Prostate gland (tissue), 2 donors: ENCODE measurements at regions of chr10 and their contacts with region 1.

Region 1: GRCh38 chr10:102729029-102730026 is 14.4 kb upstream of the WBP1L start:
- DNase-seq: peak; percentile 82
- H3K4me3 ChIP-seq: no peak overlapping the region
- H3K27ac ChIP-seq: no peak overlapping the region
- H3K4me1 ChIP-seq: no peaks in the 10 kb centered on the region
- H3K27me3 ChIP-seq: no peaks in the 10 kb centered on the region
- CTCF ChIP-seq: peak; percentile 77 to 94 (median 90)
- POLR2A ChIP-seq: no peak

Region 2: GRCh38 chr10:102904346-102904745 is 175.0 kb after region 1 on chr10:
- intact Hi-C with region 1: loop called (anchors 1 kb)
- DNase-seq: no peak
- H3K4me3 ChIP-seq: no peak overlapping the region
- H3K27ac ChIP-seq: no peak overlapping the region
- H3K4me1 ChIP-seq: no peaks in the 10 kb centered on the region
- H3K27me3 ChIP-seq: no peaks in the 10 kb centered on the region
- CTCF ChIP-seq: no peak
- POLR2A ChIP-seq: no peak

Region 3: DNA sequence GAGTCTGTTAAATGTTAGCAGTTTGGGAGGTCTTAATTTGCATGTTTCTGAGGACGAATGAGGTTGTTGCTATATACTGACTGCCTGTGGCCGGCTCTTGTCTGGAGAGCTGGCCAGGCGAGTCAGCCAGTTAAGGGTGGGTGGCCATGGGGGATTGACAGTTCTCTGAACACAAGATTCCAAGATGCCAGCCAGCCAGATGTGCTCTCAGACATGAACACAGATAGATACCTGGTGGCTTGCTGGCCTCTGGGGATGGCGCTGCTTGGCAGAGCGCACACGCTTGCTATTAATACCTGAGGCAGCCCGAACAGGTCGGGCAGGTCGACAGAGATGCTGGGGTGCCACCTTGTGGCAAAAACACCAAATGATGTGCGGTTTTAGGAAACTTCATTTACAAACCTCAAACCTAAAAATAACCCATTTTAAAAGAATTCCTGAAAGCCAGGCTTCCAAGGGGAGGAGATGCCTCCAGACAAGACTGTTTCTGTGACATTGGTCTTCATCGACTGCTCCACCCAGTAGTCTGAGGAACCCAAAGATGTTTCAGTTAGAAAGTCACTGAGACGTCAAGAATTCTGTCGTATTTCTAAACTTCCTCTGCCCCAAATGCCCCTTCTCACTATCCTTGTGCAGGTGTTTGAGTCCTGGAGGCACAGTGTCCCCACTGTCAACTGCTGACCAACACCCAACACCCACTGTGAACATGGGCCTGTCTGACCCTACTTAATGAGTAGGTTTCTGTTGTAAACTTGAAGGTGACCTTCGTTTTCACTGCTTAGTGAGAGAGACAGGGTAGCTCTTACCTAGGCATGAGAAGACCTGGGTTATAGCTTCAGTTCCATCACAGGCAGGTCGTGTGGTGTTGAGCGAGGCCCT is 340.4 kb after region 1 on chr10:
- intact Hi-C with region 1: loop called (anchors 10 kb)
- DNase-seq: peak; percentile 73
- H3K4me3 ChIP-seq: no peak overlapping the region
- H3K27ac ChIP-seq: no peak overlapping the region
- H3K4me1 ChIP-seq: no peaks in the 10 kb centered on the region
- H3K27me3 ChIP-seq: no peaks in the 10 kb centered on the region
- CTCF ChIP-seq: peak; percentile 38 to 90 (median 87)
- POLR2A ChIP-seq: no peak